Breast epithelium (tissue), 4 donors: ENCODE measurements at regions of chr2 and their contacts with region 1.

Region 1: DNA sequence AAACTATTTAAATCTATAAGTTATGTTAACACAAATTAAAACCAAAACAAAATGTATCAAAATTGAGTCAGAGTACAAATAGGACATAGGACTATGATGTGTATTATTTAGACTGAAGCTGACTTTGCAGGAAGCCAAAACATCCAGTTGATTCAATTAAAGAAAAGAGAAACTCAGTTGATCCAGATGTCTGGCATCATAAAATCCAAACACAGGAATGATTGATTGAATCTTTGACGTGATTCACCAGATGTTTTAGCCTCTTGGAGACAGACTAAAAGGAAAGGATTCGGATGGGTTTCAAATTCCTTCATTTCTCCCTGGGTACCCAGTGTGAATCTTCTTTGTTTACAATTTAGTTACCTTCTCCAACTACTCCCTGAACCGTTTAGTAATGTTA is 272.9 kb downstream of the IRS1 start:
- DNase-seq: no peak
- H3K4me3 ChIP-seq: no peak overlapping the region
- H3K27ac ChIP-seq: no peak overlapping the region
- H3K4me1 ChIP-seq: no peaks in the 10 kb centered on the region
- H3K27me3 ChIP-seq: no peaks in the 10 kb centered on the region
- CTCF ChIP-seq: no peak
- POLR2A ChIP-seq: no peak

Region 2: GRCh38 chr2:226911932-226912331 is 385.2 kb after region 1 on chr2:
- intact Hi-C with region 1: loop called (anchors 5 kb)
- DNase-seq: no peak
- H3K4me3 ChIP-seq: no peak overlapping the region
- H3K27ac ChIP-seq: no peak overlapping the region
- H3K4me1 ChIP-seq: no peaks in the 10 kb centered on the region
- H3K27me3 ChIP-seq: no peaks in the 10 kb centered on the region
- CTCF ChIP-seq: no peak
- POLR2A ChIP-seq: no peak